ENCODE measurements at regions of chr7 and their contacts with region 1.

Region 1: DNA sequence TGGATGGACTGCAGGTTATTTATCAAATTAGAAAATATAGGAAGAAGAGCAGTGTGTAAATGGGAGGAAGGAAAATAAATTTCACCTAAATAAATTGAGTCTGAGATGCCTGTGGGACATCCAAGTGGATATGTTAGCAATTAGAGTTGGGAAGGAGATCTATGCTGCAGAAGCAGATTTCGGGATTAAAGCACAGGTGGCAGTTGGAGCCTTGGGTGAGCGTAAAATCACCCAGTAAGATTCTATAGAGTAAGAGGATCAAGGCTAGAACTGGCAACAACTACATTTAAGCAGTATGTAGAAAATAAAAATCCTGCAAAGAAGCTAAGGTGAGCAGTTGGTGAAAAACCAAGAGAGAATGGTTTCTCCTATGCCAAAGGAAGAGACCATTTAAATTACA is 8.4 kb downstream of the TRIM4 start:
- DNase-seq: no peak
- ATAC-seq: no peak
- H3K4me3 ChIP-seq: no peak overlapping the region
- H3K4me3 Mint-ChIP-seq: no peak overlapping the region
- H3K27ac ChIP-seq: no peak overlapping the region
- H3K27ac Mint-ChIP-seq: no peak overlapping the region
- H3K4me1 ChIP-seq: peaks cover 5 to 6% of the 10 kb centered on the region in 2 donors
- H3K4me1 Mint-ChIP-seq: peaks cover 27% of the 10 kb centered on the region
- H3K27me3 ChIP-seq: no peaks in the 10 kb centered on the region
- H3K27me3 Mint-ChIP-seq: no peaks in the 10 kb centered on the region
- CTCF ChIP-seq: no peak

Region 2: DNA sequence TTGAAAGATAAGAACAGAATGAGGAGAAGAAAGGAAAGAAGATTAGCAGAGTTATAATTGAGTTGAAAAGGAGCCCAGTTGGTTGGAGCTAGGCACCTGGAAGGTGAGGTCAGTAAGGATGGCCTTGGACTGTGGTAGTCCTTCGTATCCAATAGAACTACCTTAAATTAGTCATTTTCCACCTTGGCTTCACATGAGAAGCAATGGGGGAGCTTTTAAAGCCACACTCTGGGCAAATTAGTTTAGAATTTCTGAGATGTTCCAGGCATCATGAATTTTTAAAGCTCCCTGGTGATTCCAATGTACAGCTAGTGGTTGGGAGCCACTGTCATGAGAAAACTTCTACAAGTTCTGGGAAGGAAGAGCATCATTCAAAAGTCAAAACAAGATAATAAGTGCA is 203.9 kb before region 1 on chr7:
- CTCF ChIA-PET with region 1: no interaction called
- POLR2A ChIA-PET with region 1: no interaction called
- intact Hi-C with region 1: no loop called
- DNase-seq: no peak
- ATAC-seq: no peak
- H3K4me3 ChIP-seq: no peak overlapping the region
- H3K4me3 Mint-ChIP-seq: no peak overlapping the region
- H3K27ac ChIP-seq: no peak overlapping the region
- H3K27ac Mint-ChIP-seq: no peak overlapping the region
- H3K4me1 ChIP-seq: no peaks in the 10 kb centered on the region
- H3K4me1 Mint-ChIP-seq: no peaks in the 10 kb centered on the region
- H3K27me3 ChIP-seq: no peaks in the 10 kb centered on the region
- H3K27me3 Mint-ChIP-seq: peaks cover 10% of the 10 kb centered on the region
- CTCF ChIP-seq: no peak

Region 3: GRCh38 chr7:99752390-99752789 is 158.6 kb before region 1 on chr7:
- CTCF ChIA-PET with region 1: no interaction called
- POLR2A ChIA-PET with region 1: no interaction called
- intact Hi-C with region 1: no loop called
- DNase-seq: no peak
- ATAC-seq: no peak
- H3K4me3 ChIP-seq: no peak overlapping the region
- H3K4me3 Mint-ChIP-seq: no peak overlapping the region
- H3K27ac ChIP-seq: no peak overlapping the region
- H3K27ac Mint-ChIP-seq: no peak overlapping the region
- H3K4me1 ChIP-seq: no peaks in the 10 kb centered on the region
- H3K4me1 Mint-ChIP-seq: no peaks in the 10 kb centered on the region
- H3K27me3 ChIP-seq: peaks cover 0 to 23% (median 1%) of the 10 kb centered on the region in 4 experiments
- H3K27me3 Mint-ChIP-seq: peaks cover 42% of the 10 kb centered on the region
- CTCF ChIP-seq: no peak

Region 4: DNA sequence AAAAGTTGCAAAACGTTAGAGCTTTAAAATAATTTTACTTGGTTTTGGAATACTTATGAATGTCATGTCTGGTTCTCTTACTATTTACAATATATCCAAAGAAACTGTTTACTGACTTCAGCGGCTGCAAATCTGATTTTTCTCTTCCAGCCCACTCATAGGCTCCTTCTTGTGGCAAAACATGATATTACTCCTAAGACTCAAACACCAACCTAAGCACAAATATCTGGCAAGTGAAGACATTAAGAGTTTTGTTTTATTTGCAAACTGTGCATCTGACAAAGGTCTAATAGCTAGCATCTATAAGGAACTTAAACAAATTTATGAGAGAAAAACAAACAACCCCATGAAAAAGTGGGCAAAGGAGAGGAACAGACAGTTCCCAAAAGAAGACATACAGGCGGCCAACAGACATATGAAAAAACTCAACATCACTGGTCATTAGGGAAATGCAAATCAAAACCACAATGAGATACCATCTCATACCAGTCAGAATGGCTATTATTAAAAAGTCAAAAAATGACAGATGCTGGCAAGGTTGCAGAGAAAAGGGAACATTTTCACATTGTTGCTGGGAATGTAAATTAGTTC is 38.8 kb after region 1 on chr7:
- CTCF ChIA-PET with region 1: interaction called, 11 read pairs
- POLR2A ChIA-PET with region 1: no interaction called
- intact Hi-C with region 1: loop called (anchors 1 kb)
- DNase-seq: no peak
- ATAC-seq: no peak
- H3K4me3 ChIP-seq: no peak overlapping the region
- H3K4me3 Mint-ChIP-seq: no peak overlapping the region
- H3K27ac ChIP-seq: no peak overlapping the region
- H3K27ac Mint-ChIP-seq: no peak overlapping the region
- H3K4me1 ChIP-seq: peaks cover 0 to under 1% of the 10 kb centered on the region in 2 donors
- H3K4me1 Mint-ChIP-seq: peaks cover under 1% of the 10 kb centered on the region
- H3K27me3 ChIP-seq: peaks cover 0 to 22% (median 3%) of the 10 kb centered on the region in 4 experiments
- H3K27me3 Mint-ChIP-seq: peaks cover 35% of the 10 kb centered on the region
- CTCF ChIP-seq: no peak

Measured in B cell (primary cell).